ENCODE measurements at regions of chr6 and their contacts with region 1.

Region 1: DNA sequence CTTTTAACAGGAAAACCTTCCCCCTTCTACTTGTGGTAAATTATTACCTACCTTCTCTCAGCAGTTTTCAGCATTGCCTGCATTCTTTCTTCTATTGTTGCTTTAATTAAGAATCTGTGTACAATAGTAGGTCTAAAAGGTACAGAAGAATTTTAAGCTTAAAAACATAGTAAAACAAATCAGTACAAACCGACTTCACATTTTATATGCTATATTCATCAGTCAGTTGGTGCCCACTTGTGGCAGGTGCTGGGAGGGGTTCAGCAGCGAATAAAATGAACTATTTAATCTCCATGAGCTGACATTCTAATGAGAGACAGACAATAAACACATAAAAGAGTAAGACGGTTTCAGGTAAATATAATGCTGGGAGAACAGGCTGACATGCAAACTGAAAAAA is 73.4 kb upstream of the FBXO30 start:
- DNase-seq: no peak

Region 2: GRCh38 chr6:145734486-145735355 is 153.2 kb before region 1 on chr6:
- intact Hi-C with region 1: loop called (anchors 10 kb)
- DNase-seq: peak; percentile 95